Left cardiac atrium (tissue), 4 donors: ENCODE measurements at regions of chr12 and their contacts with region 1.

Region 1: DNA sequence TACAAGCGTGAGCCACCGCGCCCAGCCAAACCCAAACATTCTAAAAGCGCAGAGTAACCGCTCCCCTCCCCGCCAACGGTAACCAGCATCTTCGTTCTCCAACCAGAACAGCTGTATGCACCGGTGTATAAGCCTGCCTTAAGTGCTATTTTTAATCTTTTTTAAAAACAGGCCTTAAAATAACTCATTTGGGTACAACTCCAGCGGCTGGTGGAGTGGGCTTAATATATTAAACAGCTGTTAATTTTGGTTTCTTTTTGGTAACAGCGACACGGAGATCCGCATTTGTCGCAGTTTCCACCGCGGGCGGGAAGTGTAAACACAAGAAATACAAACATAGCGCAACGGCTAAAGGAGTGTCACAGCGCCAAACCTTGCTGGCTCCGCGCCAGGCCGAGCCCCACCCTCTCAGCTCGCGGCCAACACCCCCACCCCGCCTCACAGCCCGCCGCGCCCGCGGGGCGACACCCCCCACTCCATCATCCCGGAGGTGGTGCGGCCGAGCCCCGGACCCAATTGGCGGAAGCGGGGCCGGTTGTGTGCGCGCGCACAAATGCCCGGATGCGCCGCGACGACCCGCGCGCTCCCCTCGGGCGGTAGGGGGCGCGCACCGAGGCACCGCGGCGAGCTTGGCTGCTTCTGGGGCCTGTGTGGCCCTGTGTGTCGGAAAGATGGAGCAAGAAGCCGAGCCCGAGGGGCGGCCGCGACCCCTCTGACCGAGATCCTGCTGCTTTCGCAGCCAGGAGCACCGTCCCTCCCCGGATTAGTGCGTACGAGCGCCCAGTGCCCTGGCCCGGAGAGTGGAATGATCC is at the start of gene MDM2:
- DNase-seq: peak; percentile 96
- ATAC-seq: peak; percentile 97 to 98
- total RNA-seq, gene MDM2: 42.4 to 59.8 TPM

Region 2: GRCh38 chr12:68223083-68223747 is 584.6 kb before region 1 on chr12:
- intact Hi-C with region 1: no loop called
- DNase-seq: peak; percentile 84
- ATAC-seq: peak; percentile 98

Region 3: DNA sequence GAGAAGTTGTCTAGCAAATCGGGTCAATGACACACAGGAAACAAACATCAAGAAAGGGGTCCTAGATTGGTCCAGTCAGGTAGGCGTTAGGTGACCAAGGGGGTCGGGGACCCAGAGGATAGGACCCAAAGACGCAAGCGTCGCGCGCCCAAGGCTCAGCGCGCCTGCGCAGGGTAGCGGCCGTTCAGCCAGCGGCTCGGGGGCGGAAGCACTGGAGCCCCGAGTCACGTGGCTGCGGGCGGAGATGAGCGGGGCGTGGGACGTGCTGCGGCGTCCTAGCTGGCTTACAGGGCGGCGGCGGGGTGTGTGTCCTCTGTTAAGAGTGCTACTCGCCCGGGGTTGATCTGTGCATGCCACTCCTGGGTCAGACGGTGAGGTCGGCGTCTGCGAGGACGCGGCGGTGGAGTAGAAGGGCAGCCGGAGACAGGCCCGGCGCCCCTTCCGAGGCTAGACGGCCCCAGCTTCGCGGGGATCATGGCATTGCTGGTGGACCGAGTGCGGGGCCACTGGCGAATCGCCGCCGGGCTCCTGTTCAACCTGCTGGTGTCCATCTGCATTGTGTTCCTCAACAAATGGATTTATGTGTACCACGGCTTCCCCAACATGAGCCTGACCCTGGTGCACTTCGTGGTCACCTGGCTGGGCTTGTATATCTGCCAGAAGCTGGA is 61.7 kb before region 1 on chr12 and contains the start of gene SLC35E3:
- intact Hi-C with region 1: loop called in 1 of 2 experiments (anchors 5 kb)
- DNase-seq: peak; percentile 96
- ATAC-seq: peak; percentile 100
- total RNA-seq, gene SLC35E3: 5.2 to 7.1 TPM

Region 4: DNA sequence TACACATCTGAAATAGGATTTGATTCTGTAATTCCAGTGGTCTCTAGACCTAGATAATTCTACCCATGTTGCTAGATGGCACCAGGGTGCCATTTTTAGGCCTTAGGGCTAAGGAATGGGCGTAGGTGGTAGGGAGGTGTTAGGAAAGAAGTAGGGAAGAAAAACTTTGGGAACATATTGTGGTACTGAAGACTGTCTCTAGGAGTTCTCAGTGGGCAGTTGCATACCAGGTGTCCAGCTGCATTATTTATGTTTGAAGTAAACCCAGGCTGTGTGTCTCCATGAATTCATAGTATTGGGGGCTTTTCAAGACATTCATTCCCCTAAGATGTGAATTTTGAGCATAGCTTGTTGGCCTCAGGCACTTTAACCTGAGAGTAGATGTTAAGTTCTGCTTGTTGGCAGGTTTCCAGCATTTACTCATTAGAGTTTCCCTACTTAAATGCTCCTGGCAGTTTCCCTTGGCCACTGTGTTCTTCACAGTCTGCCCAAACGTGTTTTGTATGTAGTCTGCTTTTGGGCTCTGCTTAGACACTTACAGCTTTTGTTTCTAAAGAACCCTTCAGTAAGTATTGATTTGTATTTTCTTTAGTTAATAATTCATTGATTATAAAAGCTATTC is 746.0 kb after region 1 on chr12:
- intact Hi-C with region 1: no loop called
- DNase-seq: no peak
- ATAC-seq: peak in 1 of 2 donors; percentile 58